ENCODE measurements at regions of chr10 and their contacts with region 1.

Region 1: DNA sequence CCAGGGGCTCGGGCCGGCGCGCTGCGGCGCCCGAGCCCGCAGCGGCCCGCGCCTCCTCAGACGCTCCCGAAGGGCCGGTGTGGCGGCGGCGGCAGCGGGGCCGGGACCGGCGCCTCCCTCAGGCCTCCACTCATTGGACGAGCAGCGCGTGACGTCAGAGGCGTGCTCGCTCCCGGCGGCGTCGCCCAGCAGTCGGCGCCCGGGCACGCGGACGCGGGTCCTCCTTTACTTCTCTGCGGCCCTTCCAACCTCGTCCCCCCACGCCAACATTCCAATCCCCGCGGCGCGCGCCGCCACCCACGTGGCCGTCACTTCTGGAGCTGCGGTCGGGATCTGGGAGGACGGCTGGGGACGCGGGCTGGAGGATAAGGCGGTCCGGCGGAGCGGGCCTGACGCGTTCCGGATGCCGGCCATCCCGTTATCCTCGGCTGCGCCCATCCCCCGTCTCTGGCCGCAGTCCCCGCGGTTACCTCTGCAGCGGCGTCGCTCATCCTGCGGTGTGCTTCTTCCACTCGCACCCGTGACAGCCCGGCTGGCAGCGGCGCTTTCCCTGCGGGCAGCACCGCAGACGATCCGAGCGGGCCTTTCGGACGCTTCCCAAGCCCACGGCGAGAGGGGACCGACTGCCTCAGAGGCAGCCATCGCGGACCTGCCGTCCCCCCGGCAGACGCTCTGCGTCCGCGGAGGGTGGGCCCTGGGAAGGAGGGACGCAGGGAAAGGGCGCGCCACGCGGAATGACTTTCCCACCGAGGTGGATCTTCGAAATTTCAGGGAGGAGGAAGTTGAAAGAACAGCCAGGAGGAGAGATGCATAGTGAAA is at the start of gene PDZD8:
- DNase-seq: peak; percentile 93
- ATAC-seq: peak; percentile 89
- H3K4me3 ChIP-seq: peak within 1 kb of the TSS; percentile 76 to 99 (median 90)
- H3K4me3 Mint-ChIP-seq: peak within 1 kb of the TSS; percentile 97
- H3K27ac ChIP-seq: peak within 1 kb of the TSS; percentile 70 to 80
- H3K27ac Mint-ChIP-seq: peak within 1 kb of the TSS; percentile 91
- H3K4me1 ChIP-seq: peaks cover 17 to 24% of the 10 kb centered on the region in 2 donors
- H3K4me1 Mint-ChIP-seq: peaks cover 31% of the 10 kb centered on the region
- H3K27me3 ChIP-seq: peaks cover 0 to 23% (median 4%) of the 10 kb centered on the region in 4 experiments
- H3K27me3 Mint-ChIP-seq: peaks cover 25% of the 10 kb centered on the region
- CTCF ChIP-seq: no peak
- total RNA-seq, gene PDZD8: 11.3 and 13.2 TPM in 2 replicates

Region 2: GRCh38 chr10:116742367-116743265 is 633.0 kb before region 1 on chr10 and contains the start of gene HSPA12A:
- CTCF ChIA-PET with region 1: no interaction called
- POLR2A ChIA-PET with region 1: no interaction called
- intact Hi-C with region 1: loop called (anchors 5 kb)
- DNase-seq: peak; percentile 46
- ATAC-seq: peak; percentile 78
- H3K4me3 ChIP-seq: peak within 1 kb of the TSS in 3 of 5 experiments; percentile 8 to 48 (median 41)
- H3K4me3 Mint-ChIP-seq: peak within 1 kb of the TSS; percentile 73
- H3K27ac ChIP-seq: no peak within 1 kb of the TSS
- H3K27ac Mint-ChIP-seq: no peak within 1 kb of the TSS
- H3K4me1 ChIP-seq: peaks cover 5 to 8% of the 10 kb centered on the region in 2 donors
- H3K4me1 Mint-ChIP-seq: peaks cover 8% of the 10 kb centered on the region
- H3K27me3 ChIP-seq: peaks cover 0 to 51% (median 14%) of the 10 kb centered on the region in 4 experiments
- H3K27me3 Mint-ChIP-seq: peaks cover 58% of the 10 kb centered on the region
- CTCF ChIP-seq: no peak
- total RNA-seq, gene HSPA12A: 17.7 and 18.8 TPM in 2 replicates

Region 3: GRCh38 chr10:118341791-118342637 is 966.4 kb after region 1 on chr10 and contains the start of gene FAM204A:
- CTCF ChIA-PET with region 1: no interaction called
- POLR2A ChIA-PET with region 1: no interaction called
- intact Hi-C with region 1: loop called (anchors 1 kb)
- DNase-seq: peak; percentile 98
- ATAC-seq: peak; percentile 98
- H3K4me3 ChIP-seq: peak within 1 kb of the TSS; percentile 82 to 96 (median 94)
- H3K4me3 Mint-ChIP-seq: peak within 1 kb of the TSS; percentile 95
- H3K27ac ChIP-seq: peak within 1 kb of the TSS; percentile 31 to 90
- H3K27ac Mint-ChIP-seq: peak within 1 kb of the TSS; percentile 96
- H3K4me1 ChIP-seq: peaks cover 20 to 21% of the 10 kb centered on the region in 2 donors
- H3K4me1 Mint-ChIP-seq: peaks cover 51% of the 10 kb centered on the region
- H3K27me3 ChIP-seq: no peaks in the 10 kb centered on the region
- H3K27me3 Mint-ChIP-seq: peaks cover 4% of the 10 kb centered on the region
- CTCF ChIP-seq: no peak
- total RNA-seq, gene FAM204A: 77.8 and 79.8 TPM in 2 replicates

Measured in B cell (primary cell).